ENCODE measurements at regions of chr4 and their contacts with region 1.

Region 1: GRCh38 chr4:73446336-73446938 is 10.4 kb downstream of the AFP start:
- DNase-seq: peak; percentile 43
- H3K4me3 ChIP-seq: no peak overlapping the region
- H3K27ac ChIP-seq: no peak overlapping the region
- H3K4me1 ChIP-seq: peaks cover 7% of the 10 kb centered on the region
- H3K27me3 ChIP-seq: peaks cover 2% of the 10 kb centered on the region
- CTCF ChIP-seq: peak; percentile 84 to 94

Region 2: DNA sequence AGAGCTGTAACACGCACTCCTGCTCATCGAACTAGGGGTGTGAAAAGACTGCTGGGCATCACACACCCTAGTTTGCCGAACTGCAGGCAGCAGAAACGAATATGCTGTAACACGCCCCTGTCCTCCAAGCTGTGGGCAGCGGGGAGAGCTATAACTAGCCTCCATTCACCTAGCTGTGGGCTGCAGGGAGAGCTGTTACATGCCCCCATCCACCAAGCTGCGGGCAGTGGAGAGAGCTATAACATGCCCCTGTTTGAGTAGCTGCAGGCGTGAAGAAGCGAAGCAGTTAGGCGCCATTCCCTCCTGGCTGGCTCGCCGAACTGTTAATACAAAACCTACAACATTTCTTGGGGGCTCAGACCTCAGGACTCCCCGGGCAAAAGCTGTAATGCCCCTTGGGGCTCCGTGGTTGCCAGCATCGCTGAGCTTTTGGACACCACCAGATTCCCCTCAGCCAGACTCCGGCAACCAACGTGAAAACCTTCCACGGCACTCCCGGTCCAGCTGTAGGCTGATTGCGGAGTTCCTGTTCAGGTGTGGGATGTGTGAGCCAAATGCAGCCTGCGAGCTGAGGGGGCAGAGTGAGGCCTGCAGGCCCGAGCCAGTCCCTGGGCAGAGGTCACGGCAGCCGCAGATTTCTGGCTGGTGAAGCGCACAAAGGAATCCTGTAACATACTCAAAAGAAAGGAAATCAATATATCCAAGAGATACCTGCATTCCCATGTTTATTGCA is 146.7 kb before region 1 on chr4:
- CTCF ChIA-PET with region 1: no interaction called
- dilution Hi-C with region 1: no loop called
- in situ Hi-C with region 1: no loop called
- intact Hi-C with region 1: no loop called
- DNase-seq: no peak
- H3K4me3 ChIP-seq: no peak overlapping the region
- H3K27ac ChIP-seq: no peak overlapping the region
- H3K4me1 ChIP-seq: no peaks in the 10 kb centered on the region
- H3K27me3 ChIP-seq: no peaks in the 10 kb centered on the region
- CTCF ChIP-seq: no peak

Region 3: DNA sequence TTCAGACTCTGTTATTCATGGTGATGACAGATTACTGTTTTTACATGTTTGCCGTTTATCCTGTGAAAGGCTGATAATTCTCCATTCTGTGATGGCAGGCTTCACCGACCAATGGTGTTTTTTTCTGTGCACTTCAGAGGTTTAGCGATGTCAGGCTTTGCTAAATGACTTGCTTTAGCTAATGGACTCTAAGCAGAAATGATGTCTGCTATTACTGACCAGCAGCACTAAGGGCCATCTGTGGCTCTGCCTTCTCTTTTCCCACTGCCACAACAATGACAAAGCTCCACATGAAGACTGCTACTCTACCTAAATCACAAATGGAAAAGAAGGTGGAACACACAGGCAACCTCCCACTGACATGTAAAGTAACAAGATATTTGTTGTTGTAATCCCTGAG is 110.8 kb before region 1 on chr4:
- CTCF ChIA-PET with region 1: no interaction called
- dilution Hi-C with region 1: no loop called
- in situ Hi-C with region 1: loop called (anchors 10 kb)
- intact Hi-C with region 1: no loop called
- DNase-seq: no peak
- H3K4me3 ChIP-seq: no peak overlapping the region
- H3K27ac ChIP-seq: no peak overlapping the region
- H3K4me1 ChIP-seq: no peaks in the 10 kb centered on the region
- H3K27me3 ChIP-seq: peaks cover 3% of the 10 kb centered on the region
- CTCF ChIP-seq: no peak

Measured in mammary epithelial cell (primary cell).